SK-N-SH (cell line): ENCODE measurements at regions of chr14 and their contacts with region 1.

Region 1: GRCh38 chr14:65958664-65959562 is 527.3 kb upstream of the CCDC196 start:
- DNase-seq: peak; percentile 49
- H3K4me3 ChIP-seq: no peak overlapping the region
- H3K27ac ChIP-seq: no peak overlapping the region
- H3K4me1 ChIP-seq: no peaks in the 10 kb centered on the region
- H3K27me3 ChIP-seq: no peaks in the 10 kb centered on the region
- CTCF ChIP-seq: peak; percentile 69
- EP300 ChIP-seq: no peak
- RAD21 ChIP-seq: peak; percentile 65

Region 2: DNA sequence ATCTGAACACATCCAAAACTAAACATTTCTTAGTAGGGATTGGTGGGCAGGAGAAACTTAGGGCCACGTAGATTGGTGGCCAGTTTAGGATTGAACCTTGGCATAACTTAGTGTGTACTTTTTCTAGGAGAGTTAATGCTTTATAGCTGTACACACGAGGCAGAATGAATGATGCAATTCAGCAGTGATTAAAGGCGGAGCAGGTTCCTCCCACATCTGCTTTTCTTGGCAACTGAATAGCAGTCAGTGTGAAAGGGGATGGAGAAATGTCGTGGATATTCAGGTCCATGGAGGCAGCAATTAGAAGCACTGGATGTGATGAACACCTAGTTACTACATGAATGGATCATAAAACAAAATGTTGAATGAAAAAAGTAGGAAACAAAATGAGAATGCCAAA is 52.6 kb before region 1 on chr14:
- CTCF ChIA-PET with region 1: no interaction called
- POLR2A ChIA-PET with region 1: no interaction called
- DNase-seq: no peak
- H3K4me3 ChIP-seq: no peak overlapping the region
- H3K27ac ChIP-seq: no peak overlapping the region
- H3K4me1 ChIP-seq: no peaks in the 10 kb centered on the region
- H3K27me3 ChIP-seq: no peaks in the 10 kb centered on the region
- CTCF ChIP-seq: no peak
- EP300 ChIP-seq: no peak
- RAD21 ChIP-seq: no peak

Region 3: GRCh38 chr14:65940056-65940733 is 18.7 kb before region 1 on chr14:
- CTCF ChIA-PET with region 1: interaction called, 17 read pairs
- POLR2A ChIA-PET with region 1: no interaction called
- DNase-seq: peak; percentile 40
- H3K4me3 ChIP-seq: no peak overlapping the region
- H3K27ac ChIP-seq: no peak overlapping the region
- H3K4me1 ChIP-seq: peaks cover 0 to 4% of the 10 kb centered on the region in 2 experiments; a peak in 1 of 4 replicates
- H3K27me3 ChIP-seq: no peaks in the 10 kb centered on the region
- CTCF ChIP-seq: peak; percentile 33; the same call in 1 of the 2 replicates
- EP300 ChIP-seq: no peak
- RAD21 ChIP-seq: 0 out of 2 replicates have a peak, but pooled peaks have one; percentile 2

Region 4: DNA sequence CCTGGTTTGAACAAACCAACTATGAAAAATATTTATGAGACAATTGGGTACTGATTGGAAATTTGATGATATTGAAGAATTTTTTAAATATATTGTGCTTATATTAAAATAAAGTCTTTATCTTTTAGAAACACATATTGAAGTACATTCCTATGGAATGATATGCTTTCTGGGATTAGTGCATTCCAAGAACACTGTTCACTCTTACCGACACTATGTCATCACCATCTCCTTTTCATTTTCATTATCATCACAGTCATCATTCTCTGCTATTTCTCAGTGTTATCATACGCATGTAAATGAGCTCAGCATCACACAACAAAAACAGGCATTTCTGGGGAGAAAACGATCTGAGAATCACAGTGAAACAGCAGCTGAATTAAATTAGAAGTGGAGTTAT is 14.0 kb after region 1 on chr14:
- CTCF ChIA-PET with region 1: interaction called, 25 read pairs
- POLR2A ChIA-PET with region 1: no interaction called
- DNase-seq: no peak
- H3K4me3 ChIP-seq: no peak overlapping the region
- H3K27ac ChIP-seq: no peak overlapping the region
- H3K4me1 ChIP-seq: no peaks in the 10 kb centered on the region; a peak in 1 of 4 replicates
- H3K27me3 ChIP-seq: no peaks in the 10 kb centered on the region
- CTCF ChIP-seq: no peak
- EP300 ChIP-seq: no peak
- RAD21 ChIP-seq: no peak

Region 5: DNA sequence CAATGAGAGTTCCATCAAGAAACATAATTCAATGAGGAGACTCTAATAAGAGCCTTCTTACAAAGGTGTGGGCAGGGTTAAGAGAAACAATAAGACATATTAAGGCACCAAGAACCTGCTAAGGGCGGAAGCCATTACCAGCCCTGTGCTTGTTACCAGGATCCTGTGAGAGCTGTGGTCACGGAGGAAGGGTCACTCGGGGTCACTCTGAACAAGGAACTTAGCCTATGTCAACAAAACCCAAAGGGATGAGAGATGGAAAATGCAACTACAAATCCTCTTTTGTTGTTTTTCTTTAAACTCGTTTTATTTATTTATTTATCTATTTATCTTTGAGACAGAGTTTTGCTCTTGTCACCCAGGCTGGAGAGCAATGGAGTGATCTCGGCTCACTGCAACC is 66.9 kb after region 1 on chr14:
- CTCF ChIA-PET with region 1: no interaction called
- POLR2A ChIA-PET with region 1: no interaction called
- DNase-seq: no peak
- H3K4me3 ChIP-seq: no peak overlapping the region
- H3K27ac ChIP-seq: no peak overlapping the region
- H3K4me1 ChIP-seq: no peaks in the 10 kb centered on the region
- H3K27me3 ChIP-seq: no peaks in the 10 kb centered on the region
- CTCF ChIP-seq: no peak
- EP300 ChIP-seq: no peak
- RAD21 ChIP-seq: no peak

Region 6: GRCh38 chr14:66056926-66057552 is 98.1 kb after region 1 on chr14:
- CTCF ChIA-PET with region 1: no interaction called
- POLR2A ChIA-PET with region 1: no interaction called
- DNase-seq: no peak
- H3K4me3 ChIP-seq: no peak overlapping the region
- H3K27ac ChIP-seq: no peak overlapping the region
- H3K4me1 ChIP-seq: no peaks in the 10 kb centered on the region; a peak in 1 of 4 replicates
- H3K27me3 ChIP-seq: no peaks in the 10 kb centered on the region
- CTCF ChIP-seq: no peak
- EP300 ChIP-seq: no peak
- RAD21 ChIP-seq: no peak

Region 7: GRCh38 chr14:66117585-66117984 is 158.7 kb after region 1 on chr14:
- CTCF ChIA-PET with region 1: no interaction called
- POLR2A ChIA-PET with region 1: no interaction called
- DNase-seq: no peak
- H3K4me3 ChIP-seq: no peak overlapping the region
- H3K27ac ChIP-seq: no peak overlapping the region
- H3K4me1 ChIP-seq: no peaks in the 10 kb centered on the region; a peak in 1 of 4 replicates
- H3K27me3 ChIP-seq: no peaks in the 10 kb centered on the region
- CTCF ChIP-seq: no peak
- EP300 ChIP-seq: no peak
- RAD21 ChIP-seq: no peak